H1 (cell line): ENCODE measurements at regions of chr1 and their contacts with region 1.

Region 1: GRCh38 chr1:224637515-224637914 is 21.4 kb downstream of the CNIH3 start:
- DNase-seq: no peak
- H3K4me3 ChIP-seq: no peak overlapping the region
- H3K27ac ChIP-seq: no peak overlapping the region
- H3K4me1 ChIP-seq: peaks cover 0 to 7% (median 3%) of the 10 kb centered on the region in 4 experiments; a peak in 5 of 7 replicates
- H3K27me3 ChIP-seq: no peaks in the 10 kb centered on the region
- CTCF ChIP-seq: no peak
- EP300 ChIP-seq: no peak
- POLR2A ChIP-seq: no peak
- RAD21 ChIP-seq: no peak

Region 2: DNA sequence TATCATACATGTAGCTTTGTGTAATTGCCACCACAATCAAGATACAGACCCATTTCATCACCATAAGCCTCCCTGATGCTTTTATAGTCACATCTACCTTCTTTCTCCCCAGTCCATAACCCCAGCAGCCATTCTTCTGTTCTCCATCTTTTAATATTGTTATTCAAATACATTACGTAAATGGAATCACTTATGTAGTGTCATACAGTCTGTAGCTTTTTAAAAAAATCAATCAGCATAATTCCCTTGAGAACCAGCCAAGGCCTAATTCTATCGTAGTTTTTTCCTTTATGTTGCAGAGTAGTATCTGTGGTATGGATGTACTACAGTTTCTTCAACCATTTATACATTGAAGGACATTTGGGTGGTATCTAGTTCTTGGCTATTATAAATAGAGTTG is 171.4 kb before region 1 on chr1:
- CTCF ChIA-PET with region 1: no interaction called
- POLR2A ChIA-PET with region 1: no interaction called
- DNase-seq: no peak
- H3K4me3 ChIP-seq: no peak overlapping the region
- H3K27ac ChIP-seq: no peak overlapping the region
- H3K4me1 ChIP-seq: no peaks in the 10 kb centered on the region
- H3K27me3 ChIP-seq: no peaks in the 10 kb centered on the region
- CTCF ChIP-seq: no peak
- EP300 ChIP-seq: no peak
- POLR2A ChIP-seq: no peak
- RAD21 ChIP-seq: no peak

Region 3: DNA sequence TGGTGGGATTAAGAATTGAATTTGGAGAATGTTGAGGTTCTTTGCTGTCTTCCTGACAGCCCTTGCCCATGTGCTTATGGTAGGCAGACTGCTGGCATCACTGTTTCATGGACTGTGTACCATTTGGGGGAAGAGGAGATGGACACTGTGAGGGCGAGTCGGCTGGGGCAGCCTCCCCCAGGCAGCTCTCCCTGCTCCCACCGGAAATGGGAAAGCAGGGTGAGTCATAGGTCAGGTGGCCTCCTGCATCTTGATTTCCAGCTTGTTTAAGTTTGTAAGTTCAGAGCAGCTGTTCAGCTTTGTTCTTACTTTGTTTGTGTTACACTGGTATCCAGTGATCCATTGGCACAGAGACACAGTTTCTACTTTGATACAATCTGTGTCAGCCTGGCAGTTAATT is 108.6 kb before region 1 on chr1:
- CTCF ChIA-PET with region 1: interaction called, 11 read pairs
- POLR2A ChIA-PET with region 1: no interaction called
- DNase-seq: no peak
- H3K4me3 ChIP-seq: no peak overlapping the region
- H3K27ac ChIP-seq: no peak overlapping the region
- H3K4me1 ChIP-seq: peaks cover 0 to 4% (median 2%) of the 10 kb centered on the region in 4 experiments; a peak in 2 of 7 replicates
- H3K27me3 ChIP-seq: no peaks in the 10 kb centered on the region
- CTCF ChIP-seq: no peak
- EP300 ChIP-seq: no peak
- POLR2A ChIP-seq: no peak
- RAD21 ChIP-seq: no peak

Region 4: DNA sequence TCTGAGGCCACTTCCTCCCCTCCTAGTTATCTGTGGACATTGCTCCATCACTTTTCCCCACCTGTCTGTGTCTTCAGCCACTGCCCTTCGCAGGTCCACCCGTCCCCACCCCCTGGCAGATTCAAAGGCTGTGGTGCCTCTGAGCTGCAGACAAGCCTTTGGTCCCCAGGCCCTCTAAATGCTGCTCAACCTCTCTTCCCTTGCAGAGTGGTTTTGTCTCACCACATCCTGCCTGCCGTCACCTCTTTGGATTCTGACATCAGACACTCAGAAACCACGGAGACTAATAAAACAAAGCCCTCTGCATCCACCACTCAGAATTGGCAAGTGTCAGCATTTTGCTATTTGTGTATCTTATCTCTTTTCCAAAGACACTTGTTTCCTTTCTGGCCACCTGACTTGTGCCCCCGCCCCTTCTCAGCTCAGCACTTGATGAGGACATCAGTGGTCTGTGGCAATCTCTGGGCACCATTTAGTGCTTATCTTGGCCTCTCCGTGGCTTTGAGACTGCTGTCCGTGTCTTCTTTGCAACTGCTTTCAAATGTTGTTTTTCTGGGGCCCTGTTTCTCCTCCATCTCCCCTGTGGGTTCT is 13.7 kb before region 1 on chr1:
- CTCF ChIA-PET with region 1: interaction called, 16 read pairs
- POLR2A ChIA-PET with region 1: interaction called, 3 read pairs
- DNase-seq: no peak
- H3K4me3 ChIP-seq: no peak overlapping the region
- H3K27ac ChIP-seq: no peak overlapping the region
- H3K4me1 ChIP-seq: no peaks in the 10 kb centered on the region
- H3K27me3 ChIP-seq: peaks cover 4 to 16% (median 9%) of the 10 kb centered on the region in 4 experiments
- CTCF ChIP-seq: no peak
- EP300 ChIP-seq: no peak
- POLR2A ChIP-seq: no peak
- RAD21 ChIP-seq: no peak

Region 5: GRCh38 chr1:224650290-224650689 is 12.8 kb after region 1 on chr1:
- CTCF ChIA-PET with region 1: interaction called, 94 read pairs
- POLR2A ChIA-PET with region 1: no interaction called
- DNase-seq: no peak
- H3K4me3 ChIP-seq: no peak overlapping the region
- H3K27ac ChIP-seq: no peak overlapping the region
- H3K4me1 ChIP-seq: peaks cover 0 to 4% (median 0%) of the 10 kb centered on the region in 4 experiments; a peak in 2 of 7 replicates
- H3K27me3 ChIP-seq: no peaks in the 10 kb centered on the region
- CTCF ChIP-seq: no peak
- EP300 ChIP-seq: no peak
- POLR2A ChIP-seq: no peak
- RAD21 ChIP-seq: no peak

Region 6: GRCh38 chr1:224809613-224810012 is 172.1 kb after region 1 on chr1:
- CTCF ChIA-PET with region 1: no interaction called
- POLR2A ChIA-PET with region 1: no interaction called
- DNase-seq: no peak
- H3K4me3 ChIP-seq: no peak overlapping the region
- H3K27ac ChIP-seq: no peak overlapping the region
- H3K4me1 ChIP-seq: no peaks in the 10 kb centered on the region
- H3K27me3 ChIP-seq: no peaks in the 10 kb centered on the region
- CTCF ChIP-seq: no peak
- EP300 ChIP-seq: no peak
- POLR2A ChIP-seq: no peak
- RAD21 ChIP-seq: no peak